CD14-positive monocyte (primary cell): ENCODE measurements at regions of chr9 and their contacts with region 1.

Region 1: GRCh38 chr9:113963017-113963620 is 87.0 kb downstream of the ZNF618 start:
- DNase-seq: peak; percentile 26 to 43 (median 27)
- H3K4me3 ChIP-seq: no peak overlapping the region
- H3K4me3 Mint-ChIP-seq: no peak overlapping the region
- H3K27ac ChIP-seq: no peak overlapping the region
- H3K27ac Mint-ChIP-seq: no peak overlapping the region
- H3K4me1 ChIP-seq: no peaks in the 10 kb centered on the region
- H3K4me1 Mint-ChIP-seq: peaks cover 2% of the 10 kb centered on the region
- H3K27me3 ChIP-seq: no peaks in the 10 kb centered on the region
- H3K27me3 Mint-ChIP-seq: peaks cover 0 to 1% (median 0%) of the 10 kb centered on the region in 3 donors
- CTCF ChIP-seq: peak; percentile 93

Region 2: GRCh38 chr9:113609562-113610318 is 353.4 kb before region 1 on chr9:
- intact Hi-C with region 1: no loop called
- DNase-seq: no peak
- H3K4me3 ChIP-seq: no peak overlapping the region
- H3K4me3 Mint-ChIP-seq: no peak overlapping the region
- H3K27ac ChIP-seq: no peak overlapping the region
- H3K27ac Mint-ChIP-seq: no peak overlapping the region
- H3K4me1 ChIP-seq: no peaks in the 10 kb centered on the region
- H3K4me1 Mint-ChIP-seq: peaks cover under 1% of the 10 kb centered on the region
- H3K27me3 ChIP-seq: no peaks in the 10 kb centered on the region
- H3K27me3 Mint-ChIP-seq: peaks cover 0 to 2% (median 0%) of the 10 kb centered on the region in 3 donors
- CTCF ChIP-seq: no peak

Region 3: DNA sequence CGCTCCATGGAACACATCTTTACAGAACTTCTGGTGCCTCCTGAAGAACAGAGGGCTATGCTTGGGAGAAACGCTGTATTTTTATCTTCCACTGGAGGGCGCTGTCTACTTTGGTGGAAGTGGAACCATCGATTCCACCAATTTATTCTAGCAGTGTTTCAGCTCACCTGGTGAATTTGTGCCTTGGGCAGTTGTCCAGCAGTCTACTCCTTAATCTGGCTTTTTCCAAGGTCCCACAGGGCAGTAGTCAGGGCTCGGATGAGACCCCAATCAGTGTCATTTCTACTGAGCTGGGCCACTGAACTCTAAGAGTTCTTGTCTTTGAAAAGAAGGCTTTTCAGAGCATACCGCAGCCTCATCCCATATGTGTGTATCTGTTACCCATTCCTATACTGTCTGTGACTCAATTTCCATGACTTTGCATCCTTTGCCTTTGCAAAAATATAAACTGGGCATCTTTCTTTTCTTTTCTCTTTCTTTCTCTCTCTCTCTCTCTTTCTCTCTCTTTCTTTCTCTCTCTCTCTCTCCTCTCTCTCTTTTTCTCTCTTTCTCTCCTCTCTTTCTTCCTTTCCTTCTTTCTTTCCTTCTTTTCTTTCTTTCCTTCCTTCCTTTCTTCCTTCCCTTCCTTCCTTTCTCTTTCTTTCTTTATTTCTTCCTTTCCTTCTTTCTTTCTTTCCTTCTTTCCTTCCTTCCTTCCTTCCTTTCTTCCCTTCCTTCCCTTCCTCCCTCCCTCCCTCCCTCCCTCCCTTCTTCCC is 225.4 kb before region 1 on chr9:
- intact Hi-C with region 1: loop called in 1 of 2 experiments (anchors 2 kb)
- DNase-seq: peak; percentile 11 to 16 (median 16)
- H3K4me3 ChIP-seq: no peak overlapping the region
- H3K4me3 Mint-ChIP-seq: no peak overlapping the region
- H3K27ac ChIP-seq: no peak overlapping the region
- H3K27ac Mint-ChIP-seq: no peak overlapping the region
- H3K4me1 ChIP-seq: no peaks in the 10 kb centered on the region
- H3K4me1 Mint-ChIP-seq: peaks cover 9% of the 10 kb centered on the region
- H3K27me3 ChIP-seq: no peaks in the 10 kb centered on the region
- H3K27me3 Mint-ChIP-seq: peaks cover 1 to 6% (median 4%) of the 10 kb centered on the region in 3 donors
- CTCF ChIP-seq: peak; percentile 80

Region 4: DNA sequence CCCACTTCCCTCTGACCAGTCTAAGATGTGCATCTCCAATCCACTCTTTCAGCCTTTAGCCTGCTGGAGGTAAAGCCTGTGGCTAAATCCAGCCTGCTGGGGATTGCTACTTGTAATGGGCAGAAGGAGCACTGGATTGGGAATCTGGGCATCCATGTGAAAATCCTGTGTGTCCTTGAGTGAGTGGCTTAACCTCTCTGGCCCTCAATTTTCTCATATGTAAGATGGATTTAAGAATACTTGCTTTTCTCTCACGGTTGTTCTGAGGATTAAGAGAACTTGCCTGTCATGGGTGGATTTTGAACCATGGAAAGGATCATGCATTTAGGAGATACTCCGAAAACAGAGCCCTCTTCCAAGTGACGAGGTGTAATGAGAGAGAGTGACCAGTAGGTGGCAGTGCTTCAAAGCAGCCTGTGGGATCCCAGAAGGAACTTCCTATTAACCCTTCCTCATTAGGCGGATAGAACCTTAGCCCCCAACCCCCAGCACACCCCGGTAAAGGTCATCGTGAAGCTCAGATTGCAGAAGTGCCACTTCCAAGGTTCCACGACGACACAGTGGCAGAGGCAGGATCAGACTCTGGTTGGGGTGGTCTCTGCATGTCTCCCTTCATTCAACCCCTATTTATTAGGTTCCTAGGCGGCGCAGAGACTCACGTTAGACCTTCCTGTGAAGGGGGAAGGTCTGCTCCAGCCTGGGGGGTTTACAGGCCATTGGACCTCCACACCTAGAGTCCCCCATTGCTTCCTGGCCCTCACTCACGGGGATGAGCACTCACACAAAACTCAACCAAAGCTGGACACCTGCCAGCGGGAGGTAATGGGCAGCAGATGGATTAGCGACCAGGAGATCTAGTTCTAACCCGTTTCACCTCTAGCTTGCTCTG is 155.7 kb before region 1 on chr9:
- intact Hi-C with region 1: loop called in 1 of 2 experiments (anchors 10 kb)
- DNase-seq: peak; percentile 49 to 62 (median 60)
- H3K4me3 ChIP-seq: peak overlapping the region in 1 of 3 experiments; percentile 43
- H3K4me3 Mint-ChIP-seq: peak overlapping the region; percentile 24 to 74
- H3K27ac ChIP-seq: no peak overlapping the region
- H3K27ac Mint-ChIP-seq: no peak overlapping the region
- H3K4me1 ChIP-seq: peaks cover 3 to 13% of the 10 kb centered on the region in 2 donors
- H3K4me1 Mint-ChIP-seq: peaks cover 25% of the 10 kb centered on the region
- H3K27me3 ChIP-seq: no peaks in the 10 kb centered on the region
- H3K27me3 Mint-ChIP-seq: peaks cover 0 to 2% (median 2%) of the 10 kb centered on the region in 3 donors
- CTCF ChIP-seq: peak; percentile 90